ENCODE measurements at regions of chr22 and their contacts with region 1.

Region 1: DNA sequence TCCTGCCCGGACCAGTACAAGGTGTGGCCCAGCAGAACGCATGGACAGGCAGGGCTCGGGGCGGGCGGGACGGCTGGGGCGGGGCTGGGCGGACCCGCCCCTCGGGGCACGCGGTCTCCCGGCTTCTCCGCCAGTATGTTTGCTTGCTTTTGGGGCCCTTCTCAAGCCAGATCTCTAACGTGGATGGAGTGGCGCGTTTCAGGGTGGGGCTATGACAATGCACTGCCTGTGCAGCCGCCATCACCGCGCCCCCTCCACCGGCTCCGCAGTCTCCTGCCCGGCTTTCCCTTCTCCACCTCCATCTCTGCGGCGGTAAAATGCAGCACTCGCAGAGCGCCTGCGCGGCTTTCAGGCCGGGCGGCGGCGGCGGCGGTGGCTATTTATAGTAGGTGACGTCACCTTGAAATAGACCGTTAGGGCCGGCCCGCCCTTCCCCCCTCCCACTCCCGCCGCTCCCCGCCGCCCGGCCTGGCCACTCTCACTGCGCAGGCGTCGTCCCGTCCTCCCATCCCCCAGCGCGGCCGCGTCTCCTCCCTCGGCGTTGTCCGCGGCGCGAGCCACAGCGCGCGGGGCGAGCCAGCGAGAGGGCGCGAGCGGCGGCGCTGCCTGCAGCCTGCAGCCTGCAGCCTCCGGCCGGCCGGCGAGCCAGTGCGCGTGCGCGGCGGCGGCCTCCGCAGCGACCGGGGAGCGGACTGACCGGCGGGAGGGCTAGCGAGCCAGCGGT is at the start of gene YWHAH:
- DNase-seq: peak; percentile 95
- H3K4me3 ChIP-seq: peak within 1 kb of the TSS; percentile 94 to 100 (median 96)
- H3K27ac ChIP-seq: peak within 1 kb of the TSS; percentile 74
- H3K4me1 ChIP-seq: peaks cover 24% of the 10 kb centered on the region
- H3K27me3 ChIP-seq: no peaks in the 10 kb centered on the region
- CTCF ChIP-seq: no peak
- POLR2A ChIP-seq: peak; percentile 90
- total RNA-seq, gene YWHAH: 170 and 182 TPM in 2 replicates

Region 2: DNA sequence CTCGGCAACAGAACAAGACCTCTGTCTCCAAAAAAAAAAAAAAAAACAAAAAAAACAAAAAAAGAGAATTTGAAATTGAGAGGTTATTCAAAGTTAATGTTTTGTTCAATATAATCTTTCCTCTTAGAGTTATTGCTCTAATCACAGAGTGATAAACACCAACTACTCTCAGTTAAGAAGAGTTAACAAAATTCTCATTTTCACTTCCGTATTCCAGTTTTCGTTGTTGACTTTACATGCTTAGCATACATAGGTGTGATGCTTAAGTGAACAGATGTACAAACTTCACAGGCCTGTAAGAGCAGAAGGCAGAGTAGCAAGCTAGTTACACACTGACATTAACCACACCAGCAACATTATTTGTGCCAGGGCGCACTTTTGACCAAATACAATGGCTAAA is 466.8 kb before region 1 on chr22:
- CTCF ChIA-PET with region 1: no interaction called
- POLR2A ChIA-PET with region 1: no interaction called
- dilution Hi-C with region 1: no loop called
- intact Hi-C with region 1: no loop called
- DNase-seq: no peak
- H3K4me3 ChIP-seq: no peak overlapping the region
- H3K27ac ChIP-seq: no peak overlapping the region
- H3K4me1 ChIP-seq: no peaks in the 10 kb centered on the region
- H3K27me3 ChIP-seq: no peaks in the 10 kb centered on the region
- CTCF ChIP-seq: no peak
- POLR2A ChIP-seq: no peak

Region 3: GRCh38 chr22:31829505-31829904 is 114.6 kb before region 1 on chr22:
- CTCF ChIA-PET with region 1: interaction called, 5 read pairs
- POLR2A ChIA-PET with region 1: no interaction called
- dilution Hi-C with region 1: no loop called
- intact Hi-C with region 1: loop called (anchors 5 kb)
- DNase-seq: peak; percentile 73
- H3K4me3 ChIP-seq: no peak overlapping the region
- H3K27ac ChIP-seq: peak overlapping the region; percentile 59
- H3K4me1 ChIP-seq: peaks cover 15% of the 10 kb centered on the region
- H3K27me3 ChIP-seq: no peaks in the 10 kb centered on the region
- CTCF ChIP-seq: no peak
- POLR2A ChIP-seq: peak; percentile 52

Region 4: DNA sequence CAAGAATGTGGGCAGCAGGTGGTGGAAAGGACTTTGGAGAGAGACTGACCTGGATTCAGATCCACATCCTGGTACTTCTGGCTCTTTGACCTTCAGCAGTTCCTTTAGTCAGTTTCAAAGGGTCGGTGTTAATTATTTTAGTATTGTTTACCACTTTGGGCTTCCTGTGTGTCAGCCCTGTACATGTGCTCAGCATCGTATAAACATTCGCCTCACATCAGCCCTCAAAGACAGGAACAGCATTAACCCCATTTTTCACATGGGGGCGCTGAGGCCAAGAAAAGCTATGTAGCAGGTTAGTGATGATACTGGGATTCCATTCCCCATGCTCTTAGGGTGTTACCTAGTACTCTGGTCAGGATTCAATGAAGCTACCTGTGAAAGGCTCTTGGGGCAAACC is 71.9 kb before region 1 on chr22:
- CTCF ChIA-PET with region 1: interaction called, 17 read pairs
- POLR2A ChIA-PET with region 1: no interaction called
- dilution Hi-C with region 1: no loop called
- intact Hi-C with region 1: loop called (anchors 1 kb)
- DNase-seq: peak; percentile 31
- H3K4me3 ChIP-seq: no peak overlapping the region
- H3K27ac ChIP-seq: peak overlapping the region; percentile 90
- H3K4me1 ChIP-seq: peaks cover 22% of the 10 kb centered on the region
- H3K27me3 ChIP-seq: no peaks in the 10 kb centered on the region
- CTCF ChIP-seq: peak in 1 of 2 donors; percentile 11
- POLR2A ChIP-seq: no peak

Region 5: GRCh38 chr22:31901388-31902137 is 42.6 kb before region 1 on chr22:
- CTCF ChIA-PET with region 1: no interaction called
- POLR2A ChIA-PET with region 1: no interaction called
- dilution Hi-C with region 1: no loop called
- intact Hi-C with region 1: loop called (anchors 2 kb)
- DNase-seq: peak; percentile 83
- H3K4me3 ChIP-seq: no peak overlapping the region
- H3K27ac ChIP-seq: no peak overlapping the region
- H3K4me1 ChIP-seq: peaks cover 15% of the 10 kb centered on the region
- H3K27me3 ChIP-seq: no peaks in the 10 kb centered on the region
- CTCF ChIP-seq: no peak
- POLR2A ChIP-seq: no peak